ENCODE measurements at regions of chr1 and their contacts with region 1.

Region 1: GRCh38 chr1:20376880-20377494 is 86.3 kb downstream of the VWA5B1 start:
- DNase-seq: peak; percentile 73
- ATAC-seq: peak; percentile 92
- H3K4me3 Mint-ChIP-seq: no peak overlapping the region
- H3K27ac Mint-ChIP-seq: no peak overlapping the region
- H3K4me1 Mint-ChIP-seq: peaks cover 6% of the 10 kb centered on the region
- H3K27me3 Mint-ChIP-seq: peaks cover 28% of the 10 kb centered on the region
- CTCF ChIP-seq: peak; percentile 86

Region 2: GRCh38 chr1:20212685-20213331 is 164.2 kb before region 1 on chr1:
- CTCF ChIA-PET with region 1: interaction called, 10 read pairs
- POLR2A ChIA-PET with region 1: no interaction called
- intact Hi-C with region 1: no loop called
- DNase-seq: peak; percentile 76
- ATAC-seq: peak; percentile 57
- H3K4me3 Mint-ChIP-seq: no peak overlapping the region
- H3K27ac Mint-ChIP-seq: no peak overlapping the region
- H3K4me1 Mint-ChIP-seq: peaks cover 19% of the 10 kb centered on the region
- H3K27me3 Mint-ChIP-seq: peaks cover 39% of the 10 kb centered on the region
- CTCF ChIP-seq: peak; percentile 88

Region 3: DNA sequence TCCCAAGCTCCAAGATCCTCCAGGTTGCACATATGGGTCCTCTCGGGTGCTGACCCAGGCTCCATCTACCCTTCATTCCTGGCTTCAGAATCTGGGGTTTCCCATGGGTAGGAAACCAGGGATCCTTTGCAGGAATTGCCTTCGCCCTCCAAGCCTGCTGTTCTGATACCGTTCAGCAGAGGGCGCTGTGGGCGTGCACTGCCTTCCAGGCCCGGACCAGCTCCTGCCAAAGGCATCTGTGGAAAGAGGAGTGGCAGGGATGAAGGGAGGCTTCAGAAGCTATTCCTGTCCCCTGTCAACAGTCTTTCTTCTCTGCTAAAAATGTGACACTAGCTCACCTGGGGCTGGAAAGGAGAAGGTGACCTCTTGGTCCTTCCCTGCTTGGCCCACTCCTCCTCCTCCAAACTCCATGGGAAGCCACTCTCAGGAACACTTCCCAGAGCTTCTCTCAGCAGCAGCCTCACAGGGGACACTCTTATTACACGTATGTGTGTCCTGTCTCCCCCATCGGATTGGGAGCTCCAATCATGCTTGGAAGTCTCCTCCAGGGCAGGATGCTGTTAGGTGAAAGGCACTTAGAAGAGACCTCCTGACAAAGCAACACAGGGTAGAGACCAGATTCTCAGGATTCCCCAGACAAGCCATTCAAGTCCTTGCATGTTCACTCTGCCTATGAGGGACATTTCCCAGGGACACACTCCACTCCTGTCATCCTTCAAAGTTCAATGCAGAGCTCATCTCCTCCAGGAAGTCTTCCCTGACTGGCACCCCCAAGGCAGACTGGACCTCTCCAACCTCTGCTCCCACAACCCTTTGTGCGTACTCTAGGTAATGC is 15.0 kb before region 1 on chr1:
- CTCF ChIA-PET with region 1: interaction called, 19 read pairs
- POLR2A ChIA-PET with region 1: no interaction called
- intact Hi-C with region 1: no loop called
- DNase-seq: peak; percentile 47
- ATAC-seq: no peak
- H3K4me3 Mint-ChIP-seq: no peak overlapping the region
- H3K27ac Mint-ChIP-seq: no peak overlapping the region
- H3K4me1 Mint-ChIP-seq: peaks cover 13% of the 10 kb centered on the region
- H3K27me3 Mint-ChIP-seq: peaks cover 65% of the 10 kb centered on the region
- CTCF ChIP-seq: peak; percentile 88